Dorsolateral prefrontal cortex (tissue), 120 donors: ENCODE measurements at regions of chr3 and their contacts with region 1.

Region 1: DNA sequence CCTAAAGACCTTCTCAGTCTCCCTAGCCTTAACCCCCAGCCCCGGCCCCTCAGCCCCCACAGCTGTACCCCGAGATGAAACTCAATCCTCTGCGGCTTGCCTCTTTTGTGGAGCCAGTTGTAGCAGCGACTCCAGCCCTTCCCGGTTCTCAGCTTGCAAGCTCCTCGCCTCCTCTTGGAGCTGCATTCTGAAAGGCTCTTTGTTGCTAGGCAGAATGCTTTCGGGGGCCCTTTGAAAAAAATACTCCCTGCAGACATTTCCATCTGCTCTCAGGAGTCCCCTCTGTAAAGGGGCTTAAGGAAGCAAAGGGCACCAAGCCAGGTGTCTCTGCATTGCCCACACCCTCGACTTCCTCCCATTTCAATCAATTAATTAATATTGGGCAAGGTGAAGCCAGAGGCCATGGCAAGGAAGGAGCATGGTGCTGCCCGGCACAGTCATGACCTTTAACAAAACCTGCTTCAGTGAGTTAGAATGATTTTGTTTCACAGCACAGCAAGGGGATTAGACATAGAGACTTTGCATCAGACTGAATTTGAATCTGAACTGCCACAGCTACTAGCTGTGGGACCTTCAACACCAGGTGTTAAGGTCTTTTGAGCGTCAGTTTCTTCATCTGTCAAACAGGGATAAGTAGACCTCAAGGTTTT is 65.5 kb downstream of the SRGAP3 start:
- DNase-seq: peak in 8 of 10 donors; percentile 58 to 77 (median 68)
- H3K4me3 ChIP-seq: peak overlapping the region in 35 of 59 donors; percentile 0 to 45 (median 28)
- H3K27ac ChIP-seq: peak overlapping the region in 53 of 59 donors; percentile 2 to 92 (median 71)
- H3K27me3 ChIP-seq: no peaks in the 10 kb centered on the region
- CTCF ChIP-seq: no peak

Region 2: DNA sequence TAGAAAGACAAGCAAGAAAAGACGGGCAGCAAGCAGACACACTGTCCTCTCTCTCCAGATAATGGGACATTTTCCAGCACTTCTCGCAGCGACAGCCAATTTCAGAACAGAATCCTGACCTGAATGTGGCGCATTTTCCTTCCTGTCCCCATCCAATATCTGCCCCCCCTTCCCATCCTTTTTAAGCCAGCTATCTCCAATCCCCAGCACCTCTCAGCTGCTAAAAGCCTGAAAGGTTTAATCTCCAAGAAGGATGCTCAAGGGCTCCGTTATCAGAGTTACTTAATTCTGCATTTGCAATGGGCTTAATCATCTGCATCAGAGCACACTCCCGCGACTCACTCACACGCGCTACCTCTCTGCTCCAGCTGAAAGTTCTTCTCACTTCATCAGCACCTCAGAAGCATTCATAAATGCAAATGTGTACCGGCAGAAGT is 15.0 kb after region 1 on chr3:
- intact Hi-C with region 1: loop called in 1 of 2 experiments (anchors 2 kb)
- DNase-seq: peak in 4 of 10 donors; percentile 52 to 76 (median 60)
- H3K4me3 ChIP-seq: peak overlapping the region in 37 of 59 donors; percentile 1 to 47 (median 26)
- H3K27ac ChIP-seq: peak overlapping the region in 57 of 59 donors; percentile 8 to 95 (median 70)
- H3K27me3 ChIP-seq: no peaks in the 10 kb centered on the region
- CTCF ChIP-seq: no peak